ENCODE measurements at regions of chr7 and their contacts with region 1.

Region 1: GRCh38 chr7:55477781-55478374 is 94.4 kb downstream of the VOPP1 start:
- DNase-seq: no peak
- H3K4me3 ChIP-seq: no peak overlapping the region
- H3K4me3 Mint-ChIP-seq: peak overlapping the region in 6 of 8 donors; percentile 5 to 72 (median 46)
- H3K27ac ChIP-seq: peak overlapping the region; percentile 4
- H3K27ac Mint-ChIP-seq: peak overlapping the region; percentile 10 to 82 (median 68)
- H3K4me1 ChIP-seq: peaks cover 83% of the 10 kb centered on the region
- H3K4me1 Mint-ChIP-seq: peaks cover 68 to 96% (median 77%) of the 10 kb centered on the region in 4 donors
- H3K27me3 ChIP-seq: no peaks in the 10 kb centered on the region
- H3K27me3 Mint-ChIP-seq: no peaks in the 10 kb centered on the region

Region 2: GRCh38 chr7:54201501-54201900 is 1276.4 kb before region 1 on chr7:
- CTCF ChIA-PET with region 1: no interaction called
- POLR2A ChIA-PET with region 1: no interaction called
- intact Hi-C with region 1: no loop called
- DNase-seq: no peak
- H3K4me3 ChIP-seq: no peak overlapping the region
- H3K4me3 Mint-ChIP-seq: no peak overlapping the region
- H3K27ac ChIP-seq: no peak overlapping the region
- H3K27ac Mint-ChIP-seq: no peak overlapping the region
- H3K4me1 ChIP-seq: no peaks in the 10 kb centered on the region
- H3K4me1 Mint-ChIP-seq: no peaks in the 10 kb centered on the region
- H3K27me3 ChIP-seq: no peaks in the 10 kb centered on the region
- H3K27me3 Mint-ChIP-seq: no peaks in the 10 kb centered on the region

Region 3: DNA sequence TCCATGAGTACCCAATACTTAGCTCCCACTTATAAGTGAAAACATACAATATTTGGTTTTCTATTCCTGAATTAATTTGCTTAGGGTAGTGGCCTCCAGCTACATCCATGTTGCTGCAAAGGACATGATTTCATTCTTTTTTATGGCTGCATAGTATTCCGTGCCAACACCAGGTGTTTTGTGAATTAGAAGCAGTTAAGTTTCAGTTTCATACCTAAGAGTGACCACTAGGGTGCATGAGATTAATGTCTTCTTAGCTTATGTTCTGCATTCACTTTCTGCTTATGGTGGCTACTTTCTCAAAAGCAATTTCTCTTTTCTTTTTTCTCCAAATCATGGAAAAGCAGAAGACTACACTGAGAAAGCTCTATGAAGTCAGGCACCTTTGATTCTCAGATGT is 1000.8 kb before region 1 on chr7:
- CTCF ChIA-PET with region 1: no interaction called
- POLR2A ChIA-PET with region 1: no interaction called
- intact Hi-C with region 1: no loop called
- DNase-seq: no peak
- H3K4me3 ChIP-seq: no peak overlapping the region
- H3K4me3 Mint-ChIP-seq: no peak overlapping the region
- H3K27ac ChIP-seq: no peak overlapping the region
- H3K27ac Mint-ChIP-seq: no peak overlapping the region
- H3K4me1 ChIP-seq: no peaks in the 10 kb centered on the region
- H3K4me1 Mint-ChIP-seq: no peaks in the 10 kb centered on the region
- H3K27me3 ChIP-seq: no peaks in the 10 kb centered on the region
- H3K27me3 Mint-ChIP-seq: no peaks in the 10 kb centered on the region

Region 4: GRCh38 chr7:55457801-55458200 is 20.1 kb before region 1 on chr7:
- CTCF ChIA-PET with region 1: no interaction called
- POLR2A ChIA-PET with region 1: no interaction called
- intact Hi-C with region 1: no loop called
- DNase-seq: no peak
- H3K4me3 ChIP-seq: no peak overlapping the region
- H3K4me3 Mint-ChIP-seq: no peak overlapping the region
- H3K27ac ChIP-seq: no peak overlapping the region
- H3K27ac Mint-ChIP-seq: no peak overlapping the region
- H3K4me1 ChIP-seq: peaks cover 18% of the 10 kb centered on the region
- H3K4me1 Mint-ChIP-seq: peaks cover 32 to 68% (median 48%) of the 10 kb centered on the region in 4 donors
- H3K27me3 ChIP-seq: no peaks in the 10 kb centered on the region
- H3K27me3 Mint-ChIP-seq: no peaks in the 10 kb centered on the region

Region 5: GRCh38 chr7:55515569-55516279 is 37.8 kb after region 1 on chr7:
- CTCF ChIA-PET with region 1: no interaction called
- POLR2A ChIA-PET with region 1: no interaction called
- intact Hi-C with region 1: loop called (anchors 5 kb)
- DNase-seq: no peak
- H3K4me3 ChIP-seq: no peak overlapping the region
- H3K4me3 Mint-ChIP-seq: peak overlapping the region in 6 of 8 donors; percentile 3 to 66 (median 36)
- H3K27ac ChIP-seq: no peak overlapping the region
- H3K27ac Mint-ChIP-seq: peak overlapping the region in 5 of 7 donors; percentile 53 to 84 (median 72)
- H3K4me1 ChIP-seq: peaks cover 63% of the 10 kb centered on the region
- H3K4me1 Mint-ChIP-seq: peaks cover 46 to 88% (median 62%) of the 10 kb centered on the region in 4 donors
- H3K27me3 ChIP-seq: no peaks in the 10 kb centered on the region
- H3K27me3 Mint-ChIP-seq: no peaks in the 10 kb centered on the region

Measured in CD4-positive, alpha-beta memory T cell (primary cell).